Kidney (tissue), 22 donors: ENCODE measurements at regions of chr14 and their contacts with region 1.

Region 1: DNA sequence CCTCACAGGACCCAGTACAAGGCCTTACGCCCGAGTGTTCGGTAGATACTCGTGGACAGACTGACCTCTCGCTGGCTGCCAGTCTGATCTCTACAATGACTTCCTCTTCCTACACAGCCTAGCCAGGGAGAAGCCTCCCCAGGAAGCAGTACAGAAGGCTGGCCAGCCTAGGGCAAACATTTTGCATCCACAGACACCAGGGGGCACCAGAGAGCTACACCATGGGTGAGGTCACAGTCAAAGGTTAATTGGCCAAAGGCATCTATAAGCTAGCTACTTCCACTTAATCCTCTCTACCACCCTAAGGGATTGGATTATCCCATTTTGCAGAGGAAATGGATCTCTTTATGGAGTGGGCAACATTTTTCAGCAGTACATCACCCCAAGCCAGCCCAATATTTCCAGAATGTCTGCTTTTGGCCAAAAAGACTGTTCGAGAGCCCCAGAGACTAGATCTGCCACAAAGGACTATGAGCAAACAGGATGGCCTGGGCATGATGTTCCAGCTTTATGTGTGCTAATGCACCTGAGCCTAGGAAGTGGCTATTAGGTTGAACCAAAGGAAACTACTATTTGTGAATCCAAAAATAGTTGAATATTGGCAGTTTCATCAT is 14.6 kb upstream of the PNMA1 start:
- DNase-seq: peak; percentile 85 to 91 (median 86)
- H3K4me3 ChIP-seq: no peak overlapping the region
- H3K27ac ChIP-seq: peak overlapping the region in 1 of 2 donors; percentile 70
- H3K4me1 ChIP-seq: peaks cover under 1 to 24% (median 19%) of the 10 kb centered on the region in 3 donors
- H3K27me3 ChIP-seq: no peaks in the 10 kb centered on the region
- CTCF ChIP-seq: peak; percentile 91

Region 2: GRCh38 chr14:73426877-73427276 is 301.9 kb before region 1 on chr14:
- intact Hi-C with region 1: no loop called
- DNase-seq: no peak
- H3K4me3 ChIP-seq: no peak overlapping the region
- H3K27ac ChIP-seq: peak overlapping the region; percentile 1 to 3
- H3K4me1 ChIP-seq: peaks cover 0 to 18% (median 8%) of the 10 kb centered on the region in 3 donors
- H3K27me3 ChIP-seq: no peaks in the 10 kb centered on the region
- CTCF ChIP-seq: no peak

Region 3: GRCh38 chr14:73825551-73826188 is 96.8 kb after region 1 on chr14:
- intact Hi-C with region 1: loop called (anchors 5 kb)
- DNase-seq: peak; percentile 77 to 96 (median 86)
- H3K4me3 ChIP-seq: no peak overlapping the region
- H3K27ac ChIP-seq: peak overlapping the region in 1 of 2 donors; percentile 11
- H3K4me1 ChIP-seq: peaks cover 0 to 10% (median 8%) of the 10 kb centered on the region in 3 donors
- H3K27me3 ChIP-seq: no peaks in the 10 kb centered on the region
- CTCF ChIP-seq: peak; percentile 89